WTC11 (cell line): ENCODE measurements at regions of chr4 and their contacts with region 1.

Region 1: GRCh38 chr4:2954358-2955185 is 8.6 kb downstream of the NOP14 start:
- DNase-seq: peak; percentile 75
- ATAC-seq: peak; percentile 89
- H3K4me3 Mint-ChIP-seq: no peak overlapping the region
- H3K27ac Mint-ChIP-seq: no peak overlapping the region
- H3K4me1 Mint-ChIP-seq: peaks cover 7% of the 10 kb centered on the region
- H3K27me3 Mint-ChIP-seq: no peaks in the 10 kb centered on the region
- CTCF ChIP-seq: peak; percentile 89

Region 2: GRCh38 chr4:2702361-2702760 is 252.2 kb before region 1 on chr4:
- CTCF ChIA-PET with region 1: no interaction called
- POLR2A ChIA-PET with region 1: no interaction called
- DNase-seq: no peak
- ATAC-seq: no peak
- H3K4me3 Mint-ChIP-seq: no peak overlapping the region
- H3K27ac Mint-ChIP-seq: 0 out of 2 replicates have a peak overlapping the region, but pooled peaks have one; percentile 51
- H3K4me1 Mint-ChIP-seq: no peaks in the 10 kb centered on the region
- H3K27me3 Mint-ChIP-seq: no peaks in the 10 kb centered on the region
- CTCF ChIP-seq: no peak

Region 3: DNA sequence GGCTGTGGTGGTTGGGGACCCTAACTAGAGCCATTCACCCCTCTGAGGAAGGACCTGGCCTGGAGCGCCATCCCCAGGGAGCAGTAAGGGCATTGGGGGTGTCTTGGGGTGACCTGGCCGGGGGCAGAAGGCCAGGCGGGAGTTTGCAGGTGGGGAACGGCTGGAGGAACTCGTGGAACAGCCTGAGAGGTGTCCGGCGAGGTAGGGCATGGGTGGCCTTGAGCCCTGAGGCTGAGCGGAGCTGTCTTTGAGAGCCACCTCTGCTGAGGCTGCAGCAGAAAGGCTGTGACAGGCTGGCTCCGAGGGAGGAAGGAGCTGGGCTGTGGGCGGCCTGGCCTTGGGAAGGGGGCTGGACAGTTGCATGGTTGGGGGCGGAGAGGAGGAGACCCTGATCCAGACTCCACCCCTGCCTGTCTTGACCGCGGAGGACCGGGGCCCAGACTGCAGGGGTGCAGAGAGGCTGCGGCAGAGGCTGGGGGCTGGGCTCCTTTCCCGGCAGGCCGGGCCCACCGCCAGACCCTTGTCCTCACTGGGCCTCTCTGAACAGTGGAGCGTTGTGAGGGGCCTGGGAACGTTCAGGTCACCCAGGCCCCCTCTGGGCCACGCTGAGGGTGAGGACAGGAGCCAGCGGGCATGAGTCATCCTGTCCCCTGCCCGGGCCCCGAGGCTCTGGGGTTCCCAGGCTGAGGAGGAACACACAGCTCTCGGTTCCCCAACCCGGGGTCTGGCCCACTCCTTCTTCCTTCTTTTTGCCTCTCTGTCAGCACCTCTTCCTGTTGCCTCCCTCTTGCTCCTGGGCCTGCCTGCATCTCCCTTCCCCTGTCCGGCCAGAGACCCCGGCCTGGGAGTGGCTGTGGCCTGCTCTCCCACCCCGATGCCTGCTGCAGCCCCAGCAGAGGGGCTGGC is 153.6 kb before region 1 on chr4:
- CTCF ChIA-PET with region 1: no interaction called
- POLR2A ChIA-PET with region 1: no interaction called
- DNase-seq: peak; percentile 79
- ATAC-seq: peak; percentile 92
- H3K4me3 Mint-ChIP-seq: no peak overlapping the region
- H3K27ac Mint-ChIP-seq: peak overlapping the region; percentile 76
- H3K4me1 Mint-ChIP-seq: peaks cover 18% of the 10 kb centered on the region
- H3K27me3 Mint-ChIP-seq: no peaks in the 10 kb centered on the region; the same call in 1 of the 2 replicates
- CTCF ChIP-seq: no peak

Region 4: DNA sequence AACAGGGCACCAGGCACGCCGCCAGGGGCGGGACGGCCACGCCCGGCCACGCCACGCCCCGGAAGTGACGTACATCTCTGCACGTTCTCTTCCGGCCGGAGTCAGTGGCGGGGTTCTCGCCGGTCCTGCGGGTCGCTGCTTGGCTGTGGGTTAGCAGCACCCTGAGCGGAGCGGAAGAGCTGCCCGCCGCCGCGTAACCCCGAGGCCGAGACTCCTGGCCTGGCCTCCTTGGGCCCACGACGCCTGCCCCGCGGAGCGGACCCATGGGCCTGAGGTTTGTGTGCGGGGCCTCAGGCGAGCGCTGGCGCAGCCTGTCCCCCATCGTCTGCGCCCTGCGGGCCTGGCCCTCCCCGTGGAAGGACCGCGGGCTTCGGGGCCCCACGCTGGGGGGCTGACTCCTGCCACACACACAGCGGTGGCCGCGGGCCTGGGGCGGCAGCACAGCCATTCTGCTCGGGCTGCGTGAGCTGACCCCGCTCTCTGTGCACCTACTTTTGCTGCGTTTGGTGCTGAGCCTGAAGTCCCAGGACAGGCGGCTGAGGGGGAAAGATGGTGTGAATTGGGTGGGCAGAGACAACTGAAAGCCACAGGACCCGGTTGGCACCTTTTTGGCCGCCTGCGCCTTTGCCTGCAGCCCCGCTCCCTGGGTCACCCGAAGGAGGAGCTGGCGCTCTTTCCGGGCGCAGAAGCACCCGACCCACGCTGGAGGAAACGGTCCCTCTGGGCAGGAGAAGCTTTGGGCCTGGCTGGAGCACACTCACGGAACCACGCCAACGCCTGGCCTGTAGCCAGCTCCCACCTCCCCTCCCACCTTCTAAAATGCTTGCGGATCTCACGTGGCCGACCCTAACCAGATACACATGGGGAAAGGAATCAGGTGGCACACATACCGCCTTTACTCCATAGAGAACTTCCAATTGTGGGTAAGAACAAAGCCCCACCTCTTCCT is 19.5 kb before region 1 on chr4:
- CTCF ChIA-PET with region 1: interaction called, 11 read pairs
- POLR2A ChIA-PET with region 1: no interaction called
- DNase-seq: peak; percentile 95
- ATAC-seq: peak; percentile 50
- H3K4me3 Mint-ChIP-seq: peak overlapping the region; percentile 80
- H3K27ac Mint-ChIP-seq: no peak overlapping the region
- H3K4me1 Mint-ChIP-seq: peaks cover 26% of the 10 kb centered on the region
- H3K27me3 Mint-ChIP-seq: no peaks in the 10 kb centered on the region
- CTCF ChIP-seq: no peak

Region 5: GRCh38 chr4:3062471-3062870 is 107.9 kb after region 1 on chr4:
- CTCF ChIA-PET with region 1: no interaction called
- POLR2A ChIA-PET with region 1: no interaction called
- DNase-seq: no peak
- ATAC-seq: no peak
- H3K4me3 Mint-ChIP-seq: no peak overlapping the region
- H3K27ac Mint-ChIP-seq: no peak overlapping the region
- H3K4me1 Mint-ChIP-seq: no peaks in the 10 kb centered on the region
- H3K27me3 Mint-ChIP-seq: peaks cover 12% of the 10 kb centered on the region
- CTCF ChIP-seq: no peak